SK-N-SH (cell line): ENCODE measurements at regions of chr7 and their contacts with region 1.

Region 1: DNA sequence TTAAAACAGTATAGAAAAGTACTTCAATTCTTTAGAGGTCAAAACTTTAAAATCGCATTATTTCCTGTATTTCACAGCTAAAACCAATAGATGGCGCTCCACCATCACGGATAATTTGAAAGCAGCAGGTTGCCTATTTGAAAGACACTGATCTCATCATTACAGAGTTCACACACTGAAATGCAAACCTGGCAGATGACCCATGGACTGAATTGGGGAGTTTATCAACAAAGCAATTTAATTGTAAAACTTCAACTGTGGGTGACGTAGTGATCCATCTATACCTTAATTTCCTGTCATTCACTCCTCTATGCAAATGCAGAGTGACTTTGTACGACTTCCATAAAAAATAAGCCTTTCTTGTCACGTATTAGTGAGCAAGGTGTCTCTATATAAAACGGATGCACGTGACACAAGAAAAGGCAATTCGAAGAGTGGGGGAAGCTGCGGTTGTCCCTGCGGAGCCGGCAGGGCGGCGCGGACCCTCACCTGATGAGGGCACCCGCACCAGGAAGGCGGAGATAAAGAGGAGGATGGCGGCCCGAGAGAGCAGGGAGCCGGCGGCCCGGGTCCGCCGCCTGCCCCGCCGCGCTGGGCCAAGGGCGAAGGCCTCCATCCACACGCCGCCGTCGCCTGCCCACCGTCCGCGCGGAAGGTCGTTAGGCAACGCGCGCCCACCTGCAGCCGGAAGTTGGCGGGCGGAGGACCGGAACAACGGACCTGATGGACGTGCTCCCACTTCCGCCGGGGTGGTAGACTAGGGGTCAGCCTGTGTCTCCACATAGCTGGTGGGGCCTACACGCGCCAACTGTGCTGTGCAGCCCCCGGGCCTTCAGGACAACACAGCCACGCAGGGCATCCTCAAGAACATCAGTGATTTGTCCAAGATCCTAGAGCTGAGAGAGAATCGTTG is at the start of gene ZPBP:
- DNase-seq: peak; percentile 65
- H3K4me3 ChIP-seq: no peak within 1 kb of the TSS; a peak in 1 of 4 replicates
- H3K27ac ChIP-seq: no peak within 1 kb of the TSS
- H3K4me1 ChIP-seq: no peaks in the 10 kb centered on the region
- H3K27me3 ChIP-seq: no peaks in the 10 kb centered on the region
- CTCF ChIP-seq: peak; percentile 98
- EP300 ChIP-seq: no peak
- RAD21 ChIP-seq: peak; percentile 95
- polyA plus RNA-seq, gene ZPBP: not detected in 2 replicates

Region 2: GRCh38 chr7:50119815-50120637 is 27.2 kb after region 1 on chr7:
- CTCF ChIA-PET with region 1: interaction called, 10 read pairs
- POLR2A ChIA-PET with region 1: no interaction called
- DNase-seq: peak; percentile 13
- H3K4me3 ChIP-seq: no peak overlapping the region; a peak in 1 of 4 replicates
- H3K27ac ChIP-seq: no peak overlapping the region
- H3K4me1 ChIP-seq: no peaks in the 10 kb centered on the region
- H3K27me3 ChIP-seq: no peaks in the 10 kb centered on the region
- CTCF ChIP-seq: peak; percentile 47
- EP300 ChIP-seq: no peak
- RAD21 ChIP-seq: peak; percentile 40

Region 3: GRCh38 chr7:51067757-51068156 is 974.9 kb after region 1 on chr7:
- CTCF ChIA-PET with region 1: interaction called, 10 read pairs
- POLR2A ChIA-PET with region 1: no interaction called
- DNase-seq: peak; percentile 59
- H3K4me3 ChIP-seq: peak overlapping the region in 1 of 2 experiments; percentile 21; a peak in 1 of 4 replicates
- H3K27ac ChIP-seq: no peak overlapping the region
- H3K4me1 ChIP-seq: no peaks in the 10 kb centered on the region; a peak in 1 of 4 replicates
- H3K27me3 ChIP-seq: peaks cover 35% of the 10 kb centered on the region; the same call in 1 of the 2 replicates
- CTCF ChIP-seq: peak; percentile 98
- EP300 ChIP-seq: no peak
- RAD21 ChIP-seq: peak; percentile 68